Psoas muscle (tissue), 8 donors: ENCODE measurements at regions of chr22 and their contacts with region 1.

Region 1: GRCh38 chr22:36454916-36455570 is 26.4 kb downstream of the TXN2 start:
- DNase-seq: peak; percentile 90 to 95
- ATAC-seq: peak; percentile 88 to 91 (median 90)
- H3K4me3 ChIP-seq: peak overlapping the region; percentile 69
- H3K27ac ChIP-seq: peak overlapping the region; percentile 96
- H3K4me1 ChIP-seq: peaks cover 48% of the 10 kb centered on the region
- H3K27me3 ChIP-seq: no peaks in the 10 kb centered on the region
- CTCF ChIP-seq: no peak

Region 2: GRCh38 chr22:36365020-36365411 is 90.0 kb before region 1 on chr22:
- intact Hi-C with region 1: no loop called
- DNase-seq: peak; percentile 62 to 67
- ATAC-seq: peak; percentile 48 to 69 (median 61)
- H3K4me3 ChIP-seq: no peak overlapping the region
- H3K27ac ChIP-seq: peak overlapping the region; percentile 69
- H3K4me1 ChIP-seq: peaks cover 92% of the 10 kb centered on the region
- H3K27me3 ChIP-seq: no peaks in the 10 kb centered on the region
- CTCF ChIP-seq: no peak

Region 3: GRCh38 chr22:36419177-36419911 is 35.7 kb before region 1 on chr22:
- intact Hi-C with region 1: loop called in 1 of 2 experiments (anchors 5 kb)
- DNase-seq: peak in 1 of 2 donors; percentile 25
- ATAC-seq: peak in 2 of 4 donors; percentile 38 to 58
- H3K4me3 ChIP-seq: peak overlapping the region; percentile 16
- H3K27ac ChIP-seq: peak overlapping the region; percentile 42
- H3K4me1 ChIP-seq: no peaks in the 10 kb centered on the region
- H3K27me3 ChIP-seq: peaks cover 0 to 2% (median 0%) of the 10 kb centered on the region in 3 donors
- CTCF ChIP-seq: no peak